ENCODE measurements at regions of chr9 and their contacts with region 1.

Region 1: DNA sequence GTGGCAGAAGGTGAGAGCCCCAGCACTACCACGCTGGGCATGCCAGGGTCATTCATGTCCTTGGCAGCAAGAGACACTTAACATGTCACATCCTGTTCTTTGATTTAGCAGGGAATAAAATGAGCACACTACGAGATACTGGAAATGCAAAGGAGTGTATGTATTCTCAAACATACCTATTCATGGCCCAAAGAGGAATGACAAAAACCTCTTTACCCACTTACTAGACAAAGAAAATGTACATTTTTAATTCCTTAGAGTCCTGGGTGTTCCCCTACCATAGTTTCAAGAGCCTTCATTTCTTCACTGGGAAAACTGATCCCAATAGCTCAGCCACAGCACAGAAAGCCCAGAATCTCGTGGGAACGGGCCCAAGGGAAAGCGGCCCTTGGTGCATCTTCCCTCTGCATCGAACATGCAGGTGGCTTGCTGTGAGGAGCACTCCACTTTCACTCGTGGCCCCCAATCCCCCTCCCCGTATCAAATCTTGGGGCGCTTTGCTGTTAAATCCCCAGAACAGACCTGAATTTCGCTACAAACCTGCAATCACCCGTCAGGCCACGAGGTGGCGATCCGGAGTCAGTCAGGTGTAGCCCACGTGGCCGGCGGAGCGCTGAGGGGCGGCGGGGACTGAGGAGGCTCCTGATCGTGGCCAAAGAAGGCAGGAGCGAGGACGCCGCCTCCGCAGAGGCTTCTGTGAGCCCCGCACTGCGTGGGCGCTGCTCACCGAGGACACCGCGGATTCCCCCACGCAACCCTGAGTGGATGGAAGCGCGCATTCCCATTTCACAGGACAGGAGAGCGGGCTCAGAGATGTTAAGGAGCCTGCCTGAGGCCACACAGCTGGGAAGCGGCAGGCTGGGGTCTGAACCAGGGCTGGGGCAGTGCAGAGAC is 91.4 kb downstream of the LMX1B start:
- DNase-seq: peak; percentile 52 to 92 (median 80)
- ATAC-seq: peak; percentile 87 to 94 (median 91)
- H3K4me3 ChIP-seq: no peak overlapping the region
- H3K27ac ChIP-seq: no peak overlapping the region
- H3K4me1 ChIP-seq: no peaks in the 10 kb centered on the region
- H3K27me3 ChIP-seq: peaks cover 0 to 34% (median 2%) of the 10 kb centered on the region in 4 donors
- CTCF ChIP-seq: peak; percentile 82 to 90 (median 87)

Region 2: DNA sequence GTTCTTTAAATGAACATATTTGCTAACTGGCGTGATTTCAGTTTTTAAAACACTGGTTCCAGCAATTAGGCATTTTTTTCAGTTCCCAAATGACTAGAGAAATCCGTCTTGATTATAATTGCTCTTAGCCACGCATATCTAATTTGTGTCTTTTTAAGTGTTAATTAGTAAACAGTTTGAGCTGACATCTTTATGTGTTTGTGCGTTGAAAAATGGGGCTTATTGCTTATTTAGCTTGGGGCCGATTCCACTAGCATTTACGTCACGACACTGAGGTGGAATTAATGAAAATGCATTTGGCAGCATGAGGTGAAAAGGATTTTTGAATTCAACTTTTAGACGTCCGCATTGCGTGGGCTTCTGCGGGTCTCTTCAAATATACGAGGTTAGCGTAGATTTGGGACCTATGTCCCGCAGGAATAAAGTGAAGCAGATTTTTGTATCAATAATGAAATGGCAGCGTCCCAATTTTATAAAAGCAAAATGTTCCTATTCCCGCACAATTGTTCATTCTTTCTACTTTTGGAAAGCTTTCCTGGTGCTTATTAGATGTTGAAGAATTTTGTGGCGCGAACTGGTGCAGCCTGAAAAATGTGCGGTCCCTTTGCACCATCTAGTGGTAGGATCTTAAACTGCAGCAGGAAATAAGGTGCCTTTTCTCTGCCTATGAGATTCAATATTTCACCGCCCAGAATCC is 214.1 kb before region 1 on chr9:
- intact Hi-C with region 1: no loop called
- DNase-seq: peak in 1 of 6 donors; percentile 55
- ATAC-seq: peak; percentile 64 to 92 (median 86)
- H3K4me3 ChIP-seq: no peak overlapping the region
- H3K27ac ChIP-seq: no peak overlapping the region
- H3K4me1 ChIP-seq: no peaks in the 10 kb centered on the region
- H3K27me3 ChIP-seq: no peaks in the 10 kb centered on the region
- CTCF ChIP-seq: peak; percentile 79 to 86 (median 82)

Region 3: DNA sequence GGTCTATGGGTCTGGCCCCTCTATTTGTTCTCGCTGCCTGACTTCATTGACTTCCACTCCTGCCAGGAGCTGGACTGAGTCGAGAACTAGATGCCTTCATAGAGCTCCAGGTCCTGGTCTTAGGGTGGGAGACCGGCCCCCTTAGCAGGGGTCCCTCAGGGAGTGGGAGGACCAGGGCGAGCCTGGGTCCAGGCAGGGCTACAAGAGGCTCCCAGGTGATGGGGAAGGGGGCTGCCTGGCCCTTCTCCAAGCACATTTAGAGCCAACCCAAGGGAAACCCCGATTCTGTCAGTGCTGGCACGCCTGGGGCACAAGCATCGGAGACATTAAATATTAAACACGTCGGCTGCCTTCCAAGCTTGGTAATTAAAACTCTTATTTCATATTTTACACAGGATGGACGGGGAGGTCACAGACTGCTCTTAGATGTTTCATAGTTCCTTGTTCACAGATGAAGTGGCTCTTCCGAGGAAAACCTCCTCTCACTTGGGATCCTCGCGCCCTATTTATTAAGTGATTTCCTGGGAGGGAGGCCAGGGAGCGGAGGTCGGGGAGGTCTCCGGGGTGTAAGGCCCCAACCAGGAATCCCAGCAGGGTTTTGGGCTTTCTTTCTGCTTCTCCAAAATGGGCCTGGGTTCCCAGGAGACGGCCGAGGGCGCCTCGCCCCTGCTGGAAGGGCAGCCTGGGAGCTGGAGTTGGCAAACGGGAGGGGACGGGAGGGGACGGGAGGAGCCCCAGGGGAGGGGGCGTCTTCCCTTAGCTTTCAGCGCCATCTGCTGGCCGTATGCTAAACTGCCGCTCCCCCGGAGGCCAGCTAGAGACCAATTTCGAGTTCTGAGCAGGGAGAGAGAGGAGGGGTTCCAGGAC is 76.3 kb after region 1 on chr9:
- intact Hi-C with region 1: loop called in 2 of 3 experiments (anchors 5 kb)
- DNase-seq: peak; percentile 66 to 96 (median 88)
- ATAC-seq: peak; percentile 91 to 98 (median 96)
- H3K4me3 ChIP-seq: no peak overlapping the region
- H3K27ac ChIP-seq: no peak overlapping the region
- H3K4me1 ChIP-seq: no peaks in the 10 kb centered on the region
- H3K27me3 ChIP-seq: no peaks in the 10 kb centered on the region
- CTCF ChIP-seq: peak; percentile 88 to 95 (median 92)

Region 4: GRCh38 chr9:126788046-126788445 is 82.9 kb after region 1 on chr9:
- intact Hi-C with region 1: loop called in 2 of 3 experiments (anchors 5 kb)
- DNase-seq: no peak
- ATAC-seq: no peak
- H3K4me3 ChIP-seq: no peak overlapping the region
- H3K27ac ChIP-seq: no peak overlapping the region
- H3K4me1 ChIP-seq: no peaks in the 10 kb centered on the region
- H3K27me3 ChIP-seq: no peaks in the 10 kb centered on the region
- CTCF ChIP-seq: no peak